SK-N-SH (cell line): ENCODE measurements at regions of chr5 and their contacts with region 1.

Region 1: GRCh38 chr5:123273984-123274383 is 149.2 kb downstream of the CEP120 start:
- DNase-seq: peak; percentile 11
- H3K4me3 ChIP-seq: no peak overlapping the region
- H3K27ac ChIP-seq: no peak overlapping the region
- H3K4me1 ChIP-seq: no peaks in the 10 kb centered on the region; a peak in 1 of 4 replicates
- H3K27me3 ChIP-seq: no peaks in the 10 kb centered on the region
- CTCF ChIP-seq: peak; percentile 59
- EP300 ChIP-seq: no peak
- RAD21 ChIP-seq: peak; percentile 67

Region 2: DNA sequence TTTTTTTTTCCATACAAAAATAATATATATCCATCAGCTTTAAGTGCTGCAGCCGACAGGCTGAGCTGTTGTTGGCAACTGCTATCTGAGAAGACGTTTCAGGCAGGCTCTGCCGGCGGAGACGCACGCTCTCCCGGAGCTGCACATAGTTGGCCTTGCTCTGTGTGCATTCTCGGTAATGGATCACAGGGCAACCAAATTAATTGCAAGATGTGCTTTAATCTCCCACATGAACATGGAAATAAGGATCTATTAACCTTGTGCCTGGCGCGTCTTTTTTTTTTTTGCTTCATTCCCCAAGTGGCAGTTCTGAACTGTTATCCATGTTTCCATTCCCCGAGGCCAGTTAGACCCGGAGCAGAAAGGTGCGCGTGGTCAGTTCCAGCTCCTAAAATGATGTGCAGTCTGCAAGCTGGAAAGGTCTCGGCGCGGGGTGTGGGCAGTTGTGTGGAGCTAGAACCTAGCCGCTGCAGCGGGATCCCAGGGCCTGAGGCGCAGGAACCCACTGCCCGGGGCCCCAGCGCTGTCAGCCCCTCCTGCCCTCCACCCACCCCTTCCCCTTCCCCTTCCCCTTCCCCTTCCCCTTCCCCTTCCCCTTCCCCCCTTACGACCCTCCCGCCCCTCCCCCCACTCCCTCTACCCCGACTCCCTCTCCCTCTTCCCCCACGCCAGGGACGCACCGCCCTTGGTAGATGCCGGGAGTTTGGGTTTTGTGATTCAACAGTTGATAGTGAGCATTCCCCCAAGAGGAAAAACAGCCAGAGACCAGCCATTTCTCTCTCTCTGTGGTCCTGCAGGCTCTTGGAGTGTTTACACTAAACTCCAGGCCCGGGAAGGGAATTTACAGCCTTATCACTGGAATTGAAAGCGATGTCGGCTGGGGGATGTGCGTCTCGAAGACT is 11.4 kb after region 1 on chr5:
- CTCF ChIA-PET with region 1: interaction called, 14 read pairs
- POLR2A ChIA-PET with region 1: no interaction called
- DNase-seq: peak; percentile 63
- H3K4me3 ChIP-seq: peak overlapping the region; percentile 46 to 50; a peak in 3 of 4 replicates
- H3K27ac ChIP-seq: peak overlapping the region in 1 of 2 experiments; percentile 50; a peak in 2 of 4 replicates
- H3K4me1 ChIP-seq: peaks cover 0 to 8% of the 10 kb centered on the region in 2 experiments; a peak in 2 of 4 replicates
- H3K27me3 ChIP-seq: no peaks in the 10 kb centered on the region
- CTCF ChIP-seq: no peak
- EP300 ChIP-seq: no peak; a peak in 1 of 4 replicates
- RAD21 ChIP-seq: no peak